MCF 10A (cell line): ENCODE measurements at regions of chr1 and their contacts with region 1.

Region 1: DNA sequence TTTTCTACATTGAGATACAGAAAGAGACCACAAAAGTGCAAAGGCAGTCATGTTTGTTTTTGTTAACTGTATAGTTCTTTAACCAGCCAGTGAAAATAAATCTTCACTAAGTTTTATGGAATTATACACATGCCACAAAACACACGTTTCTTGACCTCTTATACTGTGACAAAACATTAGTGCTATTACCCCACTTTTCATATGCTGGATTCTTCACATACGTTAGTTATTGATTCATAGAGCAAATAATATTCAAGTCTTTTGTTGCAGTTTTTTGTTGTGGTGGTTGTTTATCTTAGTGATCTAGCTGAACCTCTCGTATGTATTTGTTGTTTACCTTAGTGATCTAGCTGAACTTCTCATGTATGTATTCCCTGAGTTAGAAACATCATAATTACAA is 28.0 kb downstream of the LYPLAL1 start:
- DNase-seq: no peak
- H3K4me3 Mint-ChIP-seq: no peak overlapping the region
- H3K27ac Mint-ChIP-seq: no peak overlapping the region
- H3K4me1 Mint-ChIP-seq: no peaks in the 10 kb centered on the region
- H3K27me3 Mint-ChIP-seq: no peaks in the 10 kb centered on the region
- CTCF ChIP-seq: no peak

Region 2: GRCh38 chr1:219189021-219189824 is 12.4 kb before region 1 on chr1:
- CTCF ChIA-PET with region 1: interaction called, 7 read pairs
- POLR2A ChIA-PET with region 1: interaction called, 18 read pairs
- intact Hi-C with region 1: no loop called
- DNase-seq: peak; percentile 42
- H3K4me3 Mint-ChIP-seq: no peak overlapping the region
- H3K27ac Mint-ChIP-seq: no peak overlapping the region
- H3K4me1 Mint-ChIP-seq: peaks cover 22% of the 10 kb centered on the region
- H3K27me3 Mint-ChIP-seq: no peaks in the 10 kb centered on the region
- CTCF ChIP-seq: no peak